ENCODE measurements at regions of chr1 and their contacts with region 1.

Region 1: DNA sequence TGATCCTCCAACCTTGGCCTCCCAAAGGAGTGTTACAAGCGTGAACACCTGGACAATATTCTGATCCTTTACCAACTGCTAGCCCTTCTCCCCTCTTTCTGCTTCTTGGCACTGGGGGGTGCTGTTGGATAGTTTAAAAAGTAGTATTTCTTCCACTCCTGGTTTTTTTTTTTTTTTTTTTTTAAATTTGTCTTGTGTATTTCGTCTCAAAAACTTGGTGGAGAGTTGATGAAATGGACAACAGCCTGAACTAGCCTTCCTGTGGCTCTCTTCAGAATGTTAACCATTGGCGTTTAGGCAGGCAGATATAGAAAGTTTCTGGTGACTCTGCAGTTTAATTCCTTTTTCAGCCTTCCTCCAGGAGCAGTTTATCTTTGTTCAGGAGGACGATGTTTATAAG is 69.7 kb upstream of the USP24 start:
- DNase-seq: peak; percentile 14 to 35 (median 30)
- ATAC-seq: no peak
- H3K4me3 ChIP-seq: no peak overlapping the region
- H3K27ac ChIP-seq: no peak overlapping the region
- H3K4me1 ChIP-seq: no peaks in the 10 kb centered on the region
- H3K27me3 ChIP-seq: no peaks in the 10 kb centered on the region
- CTCF ChIP-seq: peak in 5 of 7 experiments; percentile 16 to 52 (median 41)
- POLR2A ChIP-seq: no peak

Region 2: GRCh38 chr1:55559161-55559611 is 274.3 kb after region 1 on chr1:
- intact Hi-C with region 1: no loop called
- DNase-seq: no peak
- ATAC-seq: no peak
- H3K4me3 ChIP-seq: no peak overlapping the region
- H3K27ac ChIP-seq: no peak overlapping the region
- H3K4me1 ChIP-seq: no peaks in the 10 kb centered on the region
- H3K27me3 ChIP-seq: no peaks in the 10 kb centered on the region
- CTCF ChIP-seq: no peak
- POLR2A ChIP-seq: no peak

Region 3: DNA sequence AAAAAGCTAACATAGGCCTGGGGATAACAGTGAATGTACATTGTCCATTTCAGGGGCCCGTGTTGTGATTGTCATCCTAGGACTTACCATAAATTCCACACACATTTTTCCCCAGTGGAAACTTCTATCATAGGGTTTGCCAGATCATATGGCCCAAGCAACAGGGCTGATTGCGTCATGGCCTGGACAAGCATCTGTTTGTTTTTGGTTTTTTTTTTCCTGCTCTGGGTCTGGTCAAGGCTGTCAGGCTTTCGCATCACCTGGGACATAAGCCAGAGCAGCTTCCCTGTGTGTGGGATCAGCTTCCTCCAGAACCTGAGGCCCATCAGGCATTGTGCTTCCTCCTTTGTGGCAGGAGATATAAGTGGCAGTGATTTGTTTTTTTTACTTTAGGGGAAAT is 528.8 kb after region 1 on chr1:
- intact Hi-C with region 1: no loop called
- DNase-seq: peak; percentile 16 to 41 (median 20)
- ATAC-seq: peak; percentile 40
- H3K4me3 ChIP-seq: no peak overlapping the region
- H3K27ac ChIP-seq: no peak overlapping the region
- H3K4me1 ChIP-seq: no peaks in the 10 kb centered on the region
- H3K27me3 ChIP-seq: no peaks in the 10 kb centered on the region
- CTCF ChIP-seq: no peak
- POLR2A ChIP-seq: no peak

Region 4: GRCh38 chr1:56584910-56585528 is 1300.2 kb after region 1 on chr1:
- intact Hi-C with region 1: loop called (anchors 10 kb)
- DNase-seq: peak; percentile 32 to 63 (median 52)
- ATAC-seq: peak; percentile 82
- H3K4me3 ChIP-seq: no peak overlapping the region
- H3K27ac ChIP-seq: no peak overlapping the region
- H3K4me1 ChIP-seq: peaks cover 11% of the 10 kb centered on the region
- H3K27me3 ChIP-seq: no peaks in the 10 kb centered on the region
- CTCF ChIP-seq: peak; percentile 64 to 96 (median 92)
- POLR2A ChIP-seq: no peak

Measured in body of pancreas (tissue), 4 donors.